ENCODE measurements at regions of chr3 and their contacts with region 1.

Region 1: DNA sequence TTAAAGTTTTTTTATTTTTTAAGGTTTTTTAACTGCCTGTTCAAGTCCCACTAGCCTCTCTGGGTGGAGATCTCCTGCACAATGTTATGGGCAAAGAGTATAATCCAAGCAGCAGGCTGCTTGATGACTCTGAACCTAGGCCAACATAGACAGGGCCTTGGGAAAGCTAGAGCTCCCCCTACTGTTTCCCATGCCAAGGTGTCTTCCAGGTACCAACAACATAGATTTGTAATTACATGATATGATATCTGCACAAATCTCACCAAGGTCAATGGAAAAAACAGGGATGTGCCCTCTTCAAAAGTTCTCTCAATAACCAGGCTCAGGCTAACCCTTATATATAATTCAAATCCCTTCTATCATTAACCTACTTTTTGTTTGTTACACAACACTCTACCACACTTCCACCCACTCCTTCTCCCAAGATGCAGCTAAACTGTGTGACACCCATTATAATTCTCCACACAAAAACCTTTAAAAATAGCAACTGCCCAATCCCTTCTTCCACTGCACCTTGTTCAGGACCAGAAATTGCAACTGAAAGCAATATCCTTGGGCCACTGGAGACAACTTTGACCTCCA is 43.8 kb downstream of the RBM15B start:
- DNase-seq: peak; percentile 65
- ATAC-seq: peak; percentile 94
- H3K4me3 Mint-ChIP-seq: no peak overlapping the region
- H3K27ac Mint-ChIP-seq: peak overlapping the region; percentile 11
- H3K4me1 Mint-ChIP-seq: peaks cover 7% of the 10 kb centered on the region
- H3K27me3 Mint-ChIP-seq: no peaks in the 10 kb centered on the region

Region 2: GRCh38 chr3:51408813-51409212 is 26.0 kb before region 1 on chr3:
- CTCF ChIA-PET with region 1: interaction called, 12 read pairs
- POLR2A ChIA-PET with region 1: no interaction called
- DNase-seq: no peak
- ATAC-seq: no peak
- H3K4me3 Mint-ChIP-seq: no peak overlapping the region
- H3K27ac Mint-ChIP-seq: no peak overlapping the region
- H3K4me1 Mint-ChIP-seq: peaks cover 9% of the 10 kb centered on the region
- H3K27me3 Mint-ChIP-seq: no peaks in the 10 kb centered on the region

Region 3: GRCh38 chr3:51445544-51446280 is 10.9 kb after region 1 on chr3:
- CTCF ChIA-PET with region 1: interaction called, 13 read pairs
- POLR2A ChIA-PET with region 1: no interaction called
- DNase-seq: no peak
- ATAC-seq: no peak
- H3K4me3 Mint-ChIP-seq: no peak overlapping the region
- H3K27ac Mint-ChIP-seq: no peak overlapping the region
- H3K4me1 Mint-ChIP-seq: peaks cover 18% of the 10 kb centered on the region
- H3K27me3 Mint-ChIP-seq: no peaks in the 10 kb centered on the region

Region 4: DNA sequence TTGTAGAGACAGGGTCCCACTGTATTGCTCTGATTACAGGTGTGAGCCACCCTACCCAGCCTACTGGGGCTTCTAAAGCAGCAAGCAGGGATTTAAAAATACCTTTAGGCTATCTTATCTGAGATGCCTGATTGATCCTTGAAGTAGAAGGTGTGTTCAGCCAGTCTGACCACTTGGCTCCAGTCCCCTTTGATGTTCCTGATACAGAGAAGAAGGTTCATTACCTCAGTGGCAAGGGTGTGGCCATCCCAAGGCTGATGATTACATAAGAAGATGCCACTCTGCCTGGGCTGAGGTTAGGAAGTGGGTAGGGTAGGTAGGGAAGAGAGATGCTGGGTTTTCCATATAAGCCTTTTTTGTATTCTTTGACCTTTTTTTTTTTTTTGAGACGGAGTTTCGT is 76.2 kb after region 1 on chr3:
- CTCF ChIA-PET with region 1: no interaction called
- POLR2A ChIA-PET with region 1: no interaction called
- DNase-seq: no peak
- ATAC-seq: no peak
- H3K4me3 Mint-ChIP-seq: no peak overlapping the region
- H3K27ac Mint-ChIP-seq: no peak overlapping the region
- H3K4me1 Mint-ChIP-seq: peaks cover 23% of the 10 kb centered on the region
- H3K27me3 Mint-ChIP-seq: no peaks in the 10 kb centered on the region

Region 5: GRCh38 chr3:51692980-51693395 is 258.2 kb after region 1 on chr3:
- CTCF ChIA-PET with region 1: no interaction called
- POLR2A ChIA-PET with region 1: no interaction called
- DNase-seq: no peak
- ATAC-seq: no peak
- H3K4me3 Mint-ChIP-seq: no peak overlapping the region
- H3K27ac Mint-ChIP-seq: no peak overlapping the region
- H3K4me1 Mint-ChIP-seq: peaks cover 24% of the 10 kb centered on the region
- H3K27me3 Mint-ChIP-seq: no peaks in the 10 kb centered on the region

Measured in activated CD8-positive, alpha-beta T cell treated with anti-CD3 and anti-CD28 coated beads, Interleukin-2, amount 10 ng/mL, durations not matched to agents 7 days and 5 days (primary cell).